A549 (cell line): ENCODE measurements at regions of chr2 and their contacts with region 1.

Region 1: DNA sequence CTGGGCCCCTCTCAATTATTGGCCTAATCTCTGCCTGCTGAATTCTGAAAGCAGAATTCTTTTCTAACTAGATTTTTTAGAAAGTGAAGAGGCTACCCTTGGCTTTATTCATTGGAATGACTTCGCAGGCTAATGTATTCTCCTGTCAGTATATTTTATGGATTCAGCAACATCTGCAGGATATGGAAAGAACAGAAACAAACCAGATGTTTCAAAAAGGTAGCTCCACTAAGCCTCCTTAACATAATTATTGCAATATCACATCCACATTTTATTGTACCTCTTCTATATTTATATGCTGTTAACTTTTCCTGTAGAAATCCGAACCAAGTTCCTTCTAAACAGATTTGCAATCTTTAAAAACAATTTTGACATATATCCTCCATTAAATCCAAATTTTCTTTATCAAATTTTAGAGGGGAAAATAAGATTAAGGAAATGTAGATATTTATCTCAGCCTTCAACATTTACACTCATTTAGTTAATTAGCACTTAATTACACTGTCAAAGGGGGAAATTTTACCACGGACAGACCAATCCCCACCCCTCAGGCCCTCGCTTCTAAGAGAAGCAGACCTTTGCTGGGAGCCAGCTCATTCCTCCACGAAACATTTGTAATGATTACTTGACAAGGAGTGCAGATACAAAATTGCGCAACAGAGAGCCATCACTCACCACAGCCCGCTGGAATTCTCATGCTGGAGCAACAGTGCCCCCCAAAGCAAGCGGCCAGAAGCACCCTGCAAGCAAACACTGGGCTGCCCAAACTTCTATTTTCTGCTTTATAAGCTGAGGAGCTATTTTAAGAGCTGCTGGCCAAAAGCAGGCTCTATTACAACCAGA is 253.4 kb downstream of the ETAA1 start:
- DNase-seq: peak; percentile 49 to 87
- ATAC-seq: peak; percentile 97 to 98
- H3K4me3 ChIP-seq: no peak overlapping the region
- H3K27ac ChIP-seq: peak overlapping the region; percentile 48 to 78
- H3K4me1 ChIP-seq: peaks cover 22% of the 10 kb centered on the region
- CTCF ChIP-seq: peak; percentile 77
- EP300 ChIP-seq: no peak
- POLR2A ChIP-seq: no peak
- RAD21 ChIP-seq: peak; percentile 99

Region 2: GRCh38 chr2:66429071-66429477 is 1221.4 kb before region 1 on chr2:
- CTCF ChIA-PET with region 1: interaction called, 42 read pairs
- POLR2A ChIA-PET with region 1: interaction called, 4 read pairs
- DNase-seq: peak; percentile 27 to 69
- ATAC-seq: no peak
- H3K4me3 ChIP-seq: no peak overlapping the region
- H3K27ac ChIP-seq: no peak overlapping the region
- H3K4me1 ChIP-seq: peaks cover 21% of the 10 kb centered on the region; the same call in 2 of the 3 replicates
- CTCF ChIP-seq: peak; percentile 96
- EP300 ChIP-seq: no peak
- POLR2A ChIP-seq: no peak
- RAD21 ChIP-seq: peak; percentile 94 to 95

Region 3: GRCh38 chr2:66434679-66435548 is 1215.6 kb before region 1 on chr2 and contains the start of gene MEIS1:
- CTCF ChIA-PET with region 1: interaction called, 42 read pairs
- POLR2A ChIA-PET with region 1: interaction called, 4 read pairs
- DNase-seq: peak; percentile 93 to 95
- ATAC-seq: peak; percentile 87 to 90
- H3K4me3 ChIP-seq: peak within 1 kb of the TSS; percentile 77
- H3K27ac ChIP-seq: peak within 1 kb of the TSS; percentile 70 to 86
- H3K4me1 ChIP-seq: peaks cover 7% of the 10 kb centered on the region; the same call in 1 of the 3 replicates
- CTCF ChIP-seq: no peak
- EP300 ChIP-seq: no peak
- POLR2A ChIP-seq: peak; percentile 91
- RAD21 ChIP-seq: no peak
- polyA plus RNA-seq, gene MEIS1: 2.9 and 4.2 TPM in 2 replicates

Region 4: GRCh38 chr2:67225287-67225973 is 425.1 kb before region 1 on chr2:
- CTCF ChIA-PET with region 1: no interaction called
- POLR2A ChIA-PET with region 1: no interaction called
- DNase-seq: no peak
- ATAC-seq: no peak
- H3K4me3 ChIP-seq: no peak overlapping the region
- H3K27ac ChIP-seq: no peak overlapping the region
- H3K4me1 ChIP-seq: no peaks in the 10 kb centered on the region
- CTCF ChIP-seq: no peak
- EP300 ChIP-seq: no peak
- POLR2A ChIP-seq: no peak
- RAD21 ChIP-seq: no peak

Region 5: GRCh38 chr2:67259581-67260342 is 390.8 kb before region 1 on chr2:
- CTCF ChIA-PET with region 1: interaction called, 10 read pairs
- POLR2A ChIA-PET with region 1: no interaction called
- DNase-seq: peak; percentile 8 to 82
- ATAC-seq: peak; percentile 80 to 81
- H3K4me3 ChIP-seq: no peak overlapping the region
- H3K27ac ChIP-seq: peak overlapping the region; percentile 72 to 78
- H3K4me1 ChIP-seq: peaks cover 34% of the 10 kb centered on the region
- CTCF ChIP-seq: no peak
- EP300 ChIP-seq: peak; percentile 72 to 75; a peak in 4 of 5 replicates
- POLR2A ChIP-seq: no peak
- RAD21 ChIP-seq: peak in 1 of 2 experiments; percentile 34; a peak in 1 of 5 replicates

Region 6: GRCh38 chr2:67290451-67291290 is 359.8 kb before region 1 on chr2:
- CTCF ChIA-PET with region 1: interaction called, 10 read pairs
- POLR2A ChIA-PET with region 1: no interaction called
- DNase-seq: peak in 1 of 2 experiments; percentile 51
- ATAC-seq: peak; percentile 75
- H3K4me3 ChIP-seq: no peak overlapping the region
- H3K27ac ChIP-seq: peak overlapping the region; percentile 45 to 70; a peak in 5 of 6 replicates
- H3K4me1 ChIP-seq: peaks cover 32% of the 10 kb centered on the region
- CTCF ChIP-seq: no peak
- EP300 ChIP-seq: no peak; a peak in 1 of 5 replicates
- POLR2A ChIP-seq: no peak
- RAD21 ChIP-seq: 0 out of 5 replicates have a peak, but pooled peaks of 1 of the 2 experiments have one; percentile 16

Region 7: GRCh38 chr2:67561457-67561965 is 89.0 kb before region 1 on chr2:
- CTCF ChIA-PET with region 1: interaction called, 29 read pairs
- POLR2A ChIA-PET with region 1: no interaction called
- DNase-seq: peak; percentile 75 to 96
- ATAC-seq: peak; percentile 93 to 96
- H3K4me3 ChIP-seq: no peak overlapping the region
- H3K27ac ChIP-seq: peak overlapping the region; percentile 82 to 84
- H3K4me1 ChIP-seq: peaks cover 54% of the 10 kb centered on the region
- CTCF ChIP-seq: no peak
- EP300 ChIP-seq: peak; percentile 94 to 96; a peak in 4 of 5 replicates
- POLR2A ChIP-seq: no peak
- RAD21 ChIP-seq: peak; percentile 43 to 75

Region 8: DNA sequence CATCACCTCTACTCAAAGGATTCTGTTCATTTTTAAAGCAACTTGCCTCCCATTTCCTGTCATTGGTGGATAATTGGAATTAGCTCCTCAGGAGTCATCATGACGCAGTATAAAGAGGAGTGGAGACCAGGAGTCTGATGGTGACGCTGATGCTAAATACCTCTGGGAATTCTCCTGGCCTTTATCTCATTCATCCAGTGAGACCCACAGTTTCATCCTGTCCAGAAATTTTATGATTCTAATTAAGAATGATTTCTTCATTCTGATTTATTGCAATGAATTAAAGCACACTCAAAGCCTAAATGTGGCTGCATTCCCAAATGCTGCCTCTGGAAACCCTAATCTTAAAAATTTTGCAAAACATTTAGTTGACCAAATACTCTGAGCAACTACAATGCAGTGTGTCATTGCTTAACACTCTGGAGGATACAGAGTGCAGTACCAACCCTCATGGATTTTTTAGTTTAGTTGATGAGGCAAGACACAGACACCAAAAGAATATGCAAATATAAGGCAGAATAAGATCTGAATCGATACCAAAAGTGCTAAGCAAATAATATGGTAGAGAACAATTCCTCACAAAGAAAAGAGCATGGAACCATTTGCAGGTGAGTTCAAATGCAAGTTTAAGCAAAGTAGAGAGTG is 17.2 kb before region 1 on chr2:
- CTCF ChIA-PET with region 1: interaction called, 30 read pairs
- POLR2A ChIA-PET with region 1: no interaction called
- DNase-seq: no peak
- ATAC-seq: no peak
- H3K4me3 ChIP-seq: no peak overlapping the region
- H3K27ac ChIP-seq: no peak overlapping the region
- H3K4me1 ChIP-seq: no peaks in the 10 kb centered on the region
- CTCF ChIP-seq: no peak
- EP300 ChIP-seq: no peak
- POLR2A ChIP-seq: no peak
- RAD21 ChIP-seq: no peak

Region 9: DNA sequence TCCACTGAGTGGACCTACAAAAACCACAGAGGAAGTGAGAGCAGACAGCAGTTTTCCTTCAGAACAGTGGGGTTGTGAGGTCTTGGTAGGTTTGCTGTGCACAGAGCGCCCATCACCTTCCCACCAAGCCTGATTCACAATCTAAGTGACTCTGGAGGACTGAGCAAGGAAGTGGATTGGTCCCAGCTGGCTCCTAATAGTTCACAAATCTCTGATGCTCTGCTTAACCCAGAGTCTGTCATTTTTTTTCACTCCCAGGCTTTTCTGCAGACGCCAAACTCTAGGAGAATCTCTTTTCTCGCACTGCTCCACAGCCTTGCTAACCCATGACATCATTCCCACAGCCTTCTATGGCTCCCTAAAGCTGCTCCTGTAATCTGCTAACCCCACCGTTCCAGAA is 131.9 kb after region 1 on chr2:
- CTCF ChIA-PET with region 1: no interaction called
- POLR2A ChIA-PET with region 1: no interaction called
- DNase-seq: no peak
- ATAC-seq: no peak
- H3K4me3 ChIP-seq: no peak overlapping the region
- H3K27ac ChIP-seq: no peak overlapping the region
- H3K4me1 ChIP-seq: no peaks in the 10 kb centered on the region
- CTCF ChIP-seq: no peak
- EP300 ChIP-seq: no peak
- POLR2A ChIP-seq: no peak
- RAD21 ChIP-seq: no peak